ENCODE measurements at regions of chr5 and their contacts with region 1.

Region 1: GRCh38 chr5:63686938-63687337 is 275.3 kb downstream of the HTR1A start:
- DNase-seq: no peak
- H3K4me3 Mint-ChIP-seq: no peak overlapping the region
- H3K27ac Mint-ChIP-seq: no peak overlapping the region
- H3K4me1 Mint-ChIP-seq: no peaks in the 10 kb centered on the region
- H3K27me3 Mint-ChIP-seq: no peaks in the 10 kb centered on the region

Region 2: DNA sequence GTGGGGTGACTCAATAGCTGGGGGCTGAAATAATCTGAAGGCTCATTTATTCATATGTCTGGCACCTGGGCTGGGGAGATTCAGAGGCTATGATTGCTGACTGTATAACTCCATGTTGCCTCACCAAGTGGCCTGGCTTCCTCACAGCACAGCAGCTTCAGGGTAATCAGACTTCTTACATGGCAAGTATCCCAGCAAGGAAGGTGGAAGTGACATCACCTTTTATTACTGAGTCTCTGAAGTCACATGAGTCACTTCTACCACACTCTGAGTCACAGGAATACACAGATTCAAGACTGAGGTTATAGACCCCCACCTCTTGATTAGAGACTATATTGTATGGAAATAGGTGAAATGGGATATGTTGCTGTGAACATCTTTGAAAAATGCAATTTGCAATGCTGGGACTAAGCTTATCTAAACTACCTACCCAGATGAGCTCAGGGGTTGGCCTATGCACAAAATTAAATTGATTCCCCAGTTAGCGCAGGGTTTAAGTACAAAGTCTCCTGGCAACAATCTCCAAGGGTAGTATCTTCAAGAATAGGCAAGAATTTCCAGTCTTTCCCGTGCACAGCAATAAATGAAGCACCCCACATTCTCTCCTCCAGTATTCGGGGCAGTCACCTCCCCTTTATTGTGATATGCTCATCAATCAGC is 555.2 kb before region 1 on chr5:
- intact Hi-C with region 1: loop called (anchors 5 kb)
- DNase-seq: no peak
- H3K4me3 Mint-ChIP-seq: no peak overlapping the region
- H3K27ac Mint-ChIP-seq: no peak overlapping the region
- H3K4me1 Mint-ChIP-seq: no peaks in the 10 kb centered on the region
- H3K27me3 Mint-ChIP-seq: no peaks in the 10 kb centered on the region

Region 3: DNA sequence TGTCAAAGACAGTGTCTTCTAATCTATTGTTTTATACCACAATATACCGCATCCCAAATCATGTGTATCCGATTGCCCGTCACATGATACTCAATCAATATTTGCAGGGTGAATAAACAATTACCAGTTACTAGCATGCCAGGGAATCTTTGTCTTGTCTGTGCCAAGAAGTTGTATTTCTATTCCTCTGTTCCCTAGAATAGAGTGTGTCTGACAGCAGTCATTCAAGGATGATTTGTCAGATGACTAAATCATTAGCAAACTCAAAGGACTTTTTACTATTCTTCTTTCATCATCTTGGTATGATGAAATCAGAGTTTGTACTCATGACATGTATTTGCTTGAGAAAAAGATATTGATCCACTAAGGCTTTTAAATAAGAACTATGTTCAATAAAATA is 73.5 kb before region 1 on chr5:
- intact Hi-C with region 1: no loop called
- DNase-seq: no peak
- H3K4me3 Mint-ChIP-seq: no peak overlapping the region
- H3K27ac Mint-ChIP-seq: no peak overlapping the region
- H3K4me1 Mint-ChIP-seq: no peaks in the 10 kb centered on the region
- H3K27me3 Mint-ChIP-seq: no peaks in the 10 kb centered on the region